A549 (cell line): ENCODE measurements at regions of chr16 and their contacts with region 1.

Region 1: GRCh38 chr16:58098207-58099096 is 30.7 kb downstream of the CFAP20 start:
- DNase-seq: peak in 1 of 2 experiments; percentile 21
- ATAC-seq: peak; percentile 69 to 71
- H3K4me3 ChIP-seq: no peak overlapping the region
- H3K27ac ChIP-seq: peak overlapping the region; percentile 29 to 70; a peak in 4 of 6 replicates
- H3K4me1 ChIP-seq: peaks cover 15% of the 10 kb centered on the region
- CTCF ChIP-seq: no peak
- EP300 ChIP-seq: no peak
- POLR2A ChIP-seq: no peak
- RAD21 ChIP-seq: no peak

Region 2: DNA sequence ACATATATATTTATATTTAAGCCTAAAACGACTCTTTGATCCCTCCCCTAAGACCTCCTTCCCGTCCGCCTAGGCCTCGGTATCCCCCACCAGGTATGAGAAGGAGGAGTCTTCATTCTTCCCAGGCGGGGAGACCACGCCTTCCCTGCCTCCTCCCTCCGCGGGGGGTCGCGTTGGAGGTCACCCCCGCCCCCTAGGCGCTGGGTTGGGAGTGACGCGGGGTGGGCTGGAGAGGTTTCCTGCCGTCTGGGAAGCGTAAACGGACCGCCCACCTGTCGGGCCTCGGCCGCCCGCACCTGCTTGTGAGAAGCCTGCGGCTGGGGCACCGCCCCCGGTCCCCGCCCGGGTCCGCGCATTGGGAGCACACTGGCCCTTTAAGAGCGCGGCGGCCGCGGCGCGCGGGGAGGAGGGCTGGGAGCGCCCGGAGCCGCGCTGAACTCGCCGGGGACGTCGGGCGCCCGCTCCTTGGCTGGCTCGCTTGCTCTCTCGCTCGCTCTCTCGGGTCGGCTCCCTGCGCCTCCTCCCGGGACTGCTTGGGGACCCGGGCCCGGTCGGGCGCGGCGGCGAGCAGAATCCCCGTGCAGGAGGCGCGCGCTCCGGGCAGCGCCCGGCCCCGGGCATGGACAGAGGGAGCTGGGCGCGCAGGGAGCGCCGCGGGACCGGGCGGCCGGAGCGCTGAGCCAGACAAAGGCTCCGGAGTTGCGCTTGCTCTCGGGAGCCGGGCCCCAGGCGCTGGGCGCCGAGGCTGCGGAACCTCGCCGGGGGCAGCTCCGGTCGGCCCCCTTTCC is 72.9 kb before region 1 on chr16 and contains the start of gene MMP15:
- CTCF ChIA-PET with region 1: interaction called, 13 read pairs
- POLR2A ChIA-PET with region 1: no interaction called
- DNase-seq: peak; percentile 75 to 81
- ATAC-seq: peak; percentile 66 to 76
- H3K4me3 ChIP-seq: peak within 1 kb of the TSS; percentile 80
- H3K27ac ChIP-seq: peak within 1 kb of the TSS; percentile 79 to 84
- H3K4me1 ChIP-seq: peaks cover 20% of the 10 kb centered on the region; the same call in 1 of the 3 replicates
- CTCF ChIP-seq: no peak
- EP300 ChIP-seq: no peak
- POLR2A ChIP-seq: peak; percentile 72
- RAD21 ChIP-seq: no peak
- polyA plus RNA-seq, gene MMP15: 4.3 and 5.2 TPM in 2 replicates

Region 3: DNA sequence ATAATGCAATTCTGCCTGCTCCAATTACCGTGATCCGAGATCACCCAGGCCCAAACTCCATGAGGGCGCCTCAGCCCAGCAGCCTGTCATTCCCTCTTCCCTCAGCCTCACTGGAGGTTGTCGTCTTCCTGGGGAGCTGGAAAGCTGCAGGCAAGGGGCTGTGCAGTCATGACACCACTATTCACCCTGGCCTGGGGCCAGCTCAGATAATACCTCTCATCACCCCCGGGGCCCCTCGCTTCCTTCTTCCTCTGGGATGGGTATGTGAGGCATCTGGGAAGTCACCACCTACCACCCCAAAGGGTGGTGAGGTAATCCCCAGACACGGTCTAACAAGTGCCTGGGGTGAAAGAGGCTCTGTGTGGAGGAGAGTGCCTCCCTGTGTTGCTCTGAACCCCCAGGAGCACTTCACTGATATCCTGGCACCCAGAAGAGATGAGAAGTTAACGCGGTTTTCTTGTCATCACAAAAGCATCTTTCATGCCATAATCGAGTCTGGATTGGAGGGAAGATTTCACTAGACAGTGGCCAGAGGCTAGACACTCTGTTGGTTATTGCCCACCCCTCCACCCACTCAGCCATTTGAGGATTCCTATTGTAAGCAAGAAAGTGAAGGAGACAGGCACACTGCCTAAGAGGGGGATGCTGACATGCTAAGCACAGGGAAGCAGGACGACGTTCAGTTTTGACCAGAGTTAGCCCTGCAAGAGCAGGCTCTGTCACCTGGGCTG is 12.3 kb after region 1 on chr16:
- CTCF ChIA-PET with region 1: interaction called, 35 read pairs
- POLR2A ChIA-PET with region 1: no interaction called
- DNase-seq: no peak
- ATAC-seq: peak; percentile 27 to 41; a peak in 4 of 6 replicates
- H3K4me3 ChIP-seq: no peak overlapping the region
- H3K27ac ChIP-seq: no peak overlapping the region
- H3K4me1 ChIP-seq: no peaks in the 10 kb centered on the region
- CTCF ChIP-seq: no peak
- EP300 ChIP-seq: no peak
- POLR2A ChIP-seq: no peak
- RAD21 ChIP-seq: no peak

Region 4: DNA sequence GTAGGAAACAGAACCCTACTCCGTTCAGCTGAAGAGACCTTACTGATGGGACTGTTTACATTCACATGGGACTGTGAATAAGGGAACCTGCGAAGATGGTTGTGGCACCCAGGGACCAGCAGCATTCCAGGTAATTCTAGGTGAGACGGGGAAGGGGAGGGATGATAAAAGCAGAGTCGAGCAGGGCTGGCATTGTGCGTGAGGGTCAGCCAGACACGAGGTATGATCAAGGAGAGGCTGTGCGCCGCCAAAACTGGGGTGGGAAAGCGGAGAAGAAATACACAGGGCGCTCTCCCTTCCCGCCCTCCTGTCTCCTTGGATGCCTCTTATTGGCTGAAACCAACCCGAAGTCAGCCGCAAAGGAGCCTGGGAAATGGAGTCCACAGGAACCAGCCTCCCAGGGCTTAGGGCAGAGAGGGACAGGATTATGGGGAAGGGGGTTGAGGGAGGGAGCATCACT is 137.8 kb after region 1 on chr16:
- CTCF ChIA-PET with region 1: no interaction called
- POLR2A ChIA-PET with region 1: no interaction called
- DNase-seq: peak; percentile 69 to 82
- ATAC-seq: peak; percentile 95 to 99
- H3K4me3 ChIP-seq: peak overlapping the region; percentile 44
- H3K27ac ChIP-seq: peak overlapping the region in 1 of 2 experiments; percentile 42; a peak in 1 of 6 replicates
- H3K4me1 ChIP-seq: no peaks in the 10 kb centered on the region
- CTCF ChIP-seq: no peak
- EP300 ChIP-seq: no peak
- POLR2A ChIP-seq: no peak
- RAD21 ChIP-seq: no peak